MCF 10A (cell line): ENCODE measurements at regions of chr10 and their contacts with region 1.

Region 1: GRCh38 chr10:36779234-36779846 is 346.1 kb upstream of the ANKRD30A start:
- DNase-seq: peak; percentile 62
- H3K4me3 Mint-ChIP-seq: no peak overlapping the region
- H3K27ac Mint-ChIP-seq: peak overlapping the region; percentile 31
- H3K4me1 Mint-ChIP-seq: no peaks in the 10 kb centered on the region
- H3K27me3 Mint-ChIP-seq: no peaks in the 10 kb centered on the region
- CTCF ChIP-seq: peak; percentile 82

Region 2: GRCh38 chr10:35236739-35237138 is 1542.6 kb before region 1 on chr10:
- CTCF ChIA-PET with region 1: no interaction called
- POLR2A ChIA-PET with region 1: no interaction called
- intact Hi-C with region 1: loop called (anchors 5 kb)
- DNase-seq: peak; percentile 13
- H3K4me3 Mint-ChIP-seq: no peak overlapping the region
- H3K27ac Mint-ChIP-seq: no peak overlapping the region
- H3K4me1 Mint-ChIP-seq: no peaks in the 10 kb centered on the region
- H3K27me3 Mint-ChIP-seq: no peaks in the 10 kb centered on the region
- CTCF ChIP-seq: peak; percentile 19

Region 3: GRCh38 chr10:35613597-35614226 is 1165.6 kb before region 1 on chr10:
- CTCF ChIA-PET with region 1: interaction called, 20 read pairs
- POLR2A ChIA-PET with region 1: interaction called, 3 read pairs
- intact Hi-C with region 1: loop called (anchors 1 kb)
- DNase-seq: peak; percentile 32
- H3K4me3 Mint-ChIP-seq: no peak overlapping the region
- H3K27ac Mint-ChIP-seq: no peak overlapping the region
- H3K4me1 Mint-ChIP-seq: no peaks in the 10 kb centered on the region
- H3K27me3 Mint-ChIP-seq: peaks cover 16% of the 10 kb centered on the region
- CTCF ChIP-seq: peak; percentile 63

Region 4: GRCh38 chr10:35642027-35642792 is 1137.1 kb before region 1 on chr10 and contains the start of gene FZD8:
- CTCF ChIA-PET with region 1: interaction called, 94 read pairs
- POLR2A ChIA-PET with region 1: interaction called, 4 read pairs
- intact Hi-C with region 1: loop called (anchors 2 kb)
- DNase-seq: peak; percentile 92
- H3K4me3 Mint-ChIP-seq: peak within 1 kb of the TSS; percentile 85
- H3K27ac Mint-ChIP-seq: peak within 1 kb of the TSS; percentile 31
- H3K4me1 Mint-ChIP-seq: peaks cover 6% of the 10 kb centered on the region
- H3K27me3 Mint-ChIP-seq: no peaks in the 10 kb centered on the region
- CTCF ChIP-seq: no peak
- total RNA-seq, gene FZD8: 9.8 and 13.0 TPM in 2 replicates

Region 5: GRCh38 chr10:36725581-36726520 is 53.5 kb before region 1 on chr10:
- CTCF ChIA-PET with region 1: interaction called, 23 read pairs
- POLR2A ChIA-PET with region 1: interaction called, 3 read pairs
- intact Hi-C with region 1: loop called (anchors 1 kb)
- DNase-seq: peak; percentile 91
- H3K4me3 Mint-ChIP-seq: no peak overlapping the region
- H3K27ac Mint-ChIP-seq: no peak overlapping the region
- H3K4me1 Mint-ChIP-seq: peaks cover 8% of the 10 kb centered on the region
- H3K27me3 Mint-ChIP-seq: no peaks in the 10 kb centered on the region
- CTCF ChIP-seq: peak; percentile 63